HEK293T (cell line): ENCODE measurements at regions of chr14 and their contacts with region 1.

Region 1: GRCh38 chr14:100890061-100890850 is 13.3 kb downstream of the RTL1 start:
- DNase-seq: no peak

Region 2: GRCh38 chr14:100862277-100862676 is 28.0 kb before region 1 on chr14:
- CTCF ChIA-PET with region 1: no interaction called
- POLR2A ChIA-PET with region 1: no interaction called
- DNase-seq: no peak

Region 3: DNA sequence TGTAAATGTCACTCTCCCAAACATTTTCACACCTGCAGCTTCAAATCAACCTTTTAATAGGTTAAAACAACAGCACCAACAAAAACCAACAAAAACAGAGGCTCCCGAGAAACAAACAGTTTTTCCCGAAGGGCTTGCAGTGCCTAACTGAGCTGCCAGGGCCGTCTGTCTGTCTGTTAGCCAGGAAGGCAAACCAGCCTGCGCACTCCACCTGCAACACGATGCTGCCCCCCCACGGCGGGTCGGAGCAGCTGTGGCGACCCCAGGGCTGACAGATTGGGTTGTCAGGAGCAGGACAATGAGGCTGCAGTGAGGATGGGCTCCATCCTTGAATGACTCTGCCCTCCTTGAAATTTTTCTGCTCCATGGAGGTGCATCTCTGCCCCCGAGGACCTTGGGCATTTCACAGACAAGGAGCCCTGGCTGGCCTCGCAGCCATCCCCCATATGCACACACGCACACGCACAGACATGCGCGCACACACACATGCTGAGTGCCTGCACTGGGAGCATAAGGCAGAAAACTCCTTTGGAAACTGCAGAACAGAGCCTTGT is 10.7 kb after region 1 on chr14:
- CTCF ChIA-PET with region 1: interaction called, 11 read pairs
- POLR2A ChIA-PET with region 1: no interaction called
- DNase-seq: peak; percentile 51